ENCODE measurements at regions of chr4 and their contacts with region 1.

Region 1: DNA sequence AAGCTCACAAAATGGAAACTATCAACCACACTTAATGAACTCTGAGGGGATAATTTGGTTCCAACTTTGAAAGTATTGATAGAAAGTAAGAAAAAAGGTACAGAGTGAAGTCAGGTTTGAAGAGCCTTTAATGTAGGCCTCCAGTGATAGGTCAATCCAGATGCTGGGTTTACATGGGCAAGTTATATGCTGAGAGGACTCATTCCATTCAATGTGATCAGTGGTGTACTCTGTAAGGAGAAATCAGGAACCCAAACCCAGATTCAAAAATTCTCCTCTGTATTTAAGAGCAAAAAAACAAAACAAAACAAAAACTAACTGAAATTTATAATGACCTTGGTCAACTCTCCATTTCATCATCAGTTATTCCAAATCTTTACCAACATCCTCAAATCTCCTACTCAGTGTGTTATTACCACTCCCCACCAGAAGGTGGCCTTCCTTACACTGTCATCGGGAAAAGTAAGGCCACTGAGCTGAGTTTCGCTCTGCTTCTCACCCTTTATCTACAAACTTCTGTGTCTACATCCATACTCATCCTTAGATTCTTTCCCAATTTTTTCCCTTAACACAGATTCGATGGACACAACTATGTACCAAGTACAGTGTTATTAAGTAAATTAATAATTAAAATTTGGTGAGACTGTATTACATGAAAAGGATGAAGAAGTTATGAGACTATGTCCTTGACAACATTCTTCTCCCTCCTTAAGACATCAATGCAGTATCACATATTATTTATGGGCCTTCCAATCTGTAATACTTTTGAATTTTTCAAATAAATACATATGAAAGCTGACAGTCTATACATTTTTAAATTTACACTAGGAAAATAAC is 88.3 kb downstream of the ZAR1 start:
- DNase-seq: peak in 2 of 4 donors; percentile 57 to 77
- ATAC-seq: peak; percentile 98
- H3K4me3 ChIP-seq: no peak overlapping the region
- H3K27ac ChIP-seq: no peak overlapping the region
- H3K4me1 ChIP-seq: no peaks in the 10 kb centered on the region
- H3K27me3 ChIP-seq: no peaks in the 10 kb centered on the region
- CTCF ChIP-seq: peak; percentile 83 to 90

Region 2: DNA sequence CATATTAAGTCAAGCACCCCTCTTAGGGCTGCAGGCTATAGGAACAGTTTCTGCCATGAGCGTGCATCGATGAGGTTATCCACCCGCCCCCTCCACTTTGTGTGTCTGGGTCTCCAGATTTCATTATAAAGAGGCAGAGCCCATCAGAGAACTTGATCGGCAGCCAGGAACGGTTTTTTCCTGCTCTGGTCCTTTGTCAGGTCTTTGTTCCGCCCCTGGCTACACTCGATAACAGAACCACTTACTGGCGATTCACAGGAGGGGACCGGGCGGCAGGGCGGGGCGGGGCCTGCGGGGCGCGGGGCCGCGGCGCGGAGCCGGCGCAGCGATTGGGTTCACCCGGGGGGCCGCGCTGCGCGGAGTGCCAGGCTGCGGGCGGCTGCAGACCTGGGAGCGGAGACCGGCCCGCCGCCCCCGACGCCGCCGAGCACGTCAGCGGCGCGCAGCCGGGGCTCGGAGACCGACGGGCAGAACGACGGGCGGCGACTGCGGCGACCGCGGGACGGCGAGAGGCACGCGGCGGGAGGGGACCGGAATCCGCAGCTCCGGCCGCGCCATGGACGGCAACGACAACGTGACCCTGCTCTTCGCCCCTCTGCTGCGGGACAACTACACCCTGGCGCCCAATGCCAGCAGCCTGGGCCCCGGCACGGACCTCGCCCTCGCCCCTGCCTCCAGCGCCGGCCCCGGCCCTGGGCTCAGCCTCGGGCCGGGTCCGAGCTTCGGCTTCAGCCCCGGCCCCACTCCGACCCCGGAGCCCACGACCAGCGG is 95.2 kb before region 1 on chr4 and contains the start of gene SLC10A4:
- intact Hi-C with region 1: no loop called
- DNase-seq: peak in 1 of 4 donors; percentile 76
- ATAC-seq: peak; percentile 67
- H3K4me3 ChIP-seq: peak within 1 kb of the TSS; percentile 9 to 31
- H3K27ac ChIP-seq: no peak within 1 kb of the TSS
- H3K4me1 ChIP-seq: peaks cover 0 to 20% of the 10 kb centered on the region in 2 donors
- H3K27me3 ChIP-seq: peaks cover 60 to 88% of the 10 kb centered on the region in 2 donors
- CTCF ChIP-seq: no peak
- polyA plus RNA-seq, gene SLC10A4: 0.31 to 0.58 (median 0.36) TPM

Region 3: GRCh38 chr4:48499551-48500066 is 78.7 kb before region 1 on chr4:
- intact Hi-C with region 1: no loop called
- DNase-seq: no peak
- ATAC-seq: no peak
- H3K4me3 ChIP-seq: no peak overlapping the region
- H3K27ac ChIP-seq: no peak overlapping the region
- H3K4me1 ChIP-seq: no peaks in the 10 kb centered on the region
- H3K27me3 ChIP-seq: no peaks in the 10 kb centered on the region
- CTCF ChIP-seq: no peak

Region 4: DNA sequence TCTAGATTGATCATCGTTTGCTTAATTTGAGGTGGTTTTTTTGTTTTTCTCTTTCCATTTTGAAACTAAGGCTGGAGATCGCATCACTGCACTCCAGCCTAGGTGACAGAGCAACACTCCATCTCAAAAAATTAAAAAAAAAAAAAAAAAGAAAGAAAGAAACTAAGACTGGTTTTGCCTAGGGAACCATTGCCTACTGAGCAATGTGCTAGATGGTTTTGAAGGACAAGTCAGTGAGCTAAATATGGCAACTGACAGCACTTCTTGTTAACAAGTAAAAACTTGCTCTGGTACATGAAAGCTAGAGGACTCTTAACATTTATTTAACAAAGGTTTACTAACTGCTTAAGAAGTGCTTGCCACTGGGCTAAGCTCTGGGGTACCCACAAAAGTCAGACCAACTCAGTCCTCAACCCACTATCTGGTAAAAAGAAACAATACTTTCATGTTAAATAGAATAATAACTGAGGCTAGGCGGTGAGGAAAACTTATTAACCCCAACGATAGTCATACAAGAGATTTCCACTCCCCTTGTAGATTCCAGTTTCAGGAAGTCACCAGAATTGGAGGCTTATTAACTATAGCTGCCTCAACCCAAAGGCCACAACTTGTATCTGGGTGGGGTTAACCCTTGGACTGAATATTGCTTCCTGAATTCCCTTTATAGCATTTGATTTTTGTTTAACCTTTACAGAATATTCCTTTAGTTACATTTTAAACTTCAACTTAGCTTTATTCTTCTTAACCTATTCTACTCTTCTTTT is 90.1 kb after region 1 on chr4:
- intact Hi-C with region 1: no loop called
- DNase-seq: no peak
- ATAC-seq: peak; percentile 86
- H3K4me3 ChIP-seq: no peak overlapping the region
- H3K27ac ChIP-seq: no peak overlapping the region
- H3K4me1 ChIP-seq: peaks cover 5 to 38% of the 10 kb centered on the region in 2 donors
- H3K27me3 ChIP-seq: no peaks in the 10 kb centered on the region
- CTCF ChIP-seq: no peak

Region 5: DNA sequence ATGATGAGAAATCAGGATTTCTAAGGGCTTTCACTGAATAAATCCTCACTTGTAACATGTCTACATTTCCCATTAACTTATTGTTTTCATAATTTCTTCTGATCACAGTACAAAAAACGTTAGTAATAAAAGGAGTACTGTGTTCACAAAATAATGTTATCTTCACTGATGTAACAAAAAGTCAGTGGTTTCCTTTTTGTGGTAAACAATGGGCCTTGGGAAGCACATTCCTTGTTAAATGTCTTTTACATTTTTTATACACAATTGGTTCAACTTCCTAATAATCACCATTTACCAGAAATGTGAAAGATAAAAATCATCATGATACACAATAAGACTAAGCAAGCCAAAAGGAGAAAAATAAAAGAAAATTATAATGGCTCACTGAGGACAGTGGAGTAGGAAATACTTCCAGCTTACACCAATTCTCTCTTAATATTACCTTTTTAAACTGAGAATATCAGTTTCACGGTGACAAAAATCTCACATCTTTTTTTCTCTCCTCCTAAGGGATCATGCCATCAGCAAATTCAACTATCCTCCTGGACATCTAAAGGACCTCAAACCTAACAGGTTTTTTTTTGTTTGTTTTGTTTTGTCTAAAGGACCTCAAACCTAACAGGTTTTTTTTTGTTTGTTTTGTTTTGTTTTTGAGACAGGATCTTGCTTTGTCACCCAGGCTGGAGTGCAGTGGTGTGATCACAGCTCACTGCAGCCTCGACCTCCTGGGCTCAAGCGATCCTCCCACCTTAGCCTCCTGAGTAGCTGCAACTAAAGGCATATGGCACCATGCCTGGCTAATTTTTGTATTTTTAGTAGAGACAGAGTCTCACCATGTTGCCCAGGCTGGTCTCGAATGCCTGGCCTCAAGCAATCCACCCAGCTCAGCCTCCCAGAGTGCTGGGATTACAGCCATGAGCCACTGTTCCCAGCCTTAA is 144.4 kb after region 1 on chr4:
- intact Hi-C with region 1: no loop called
- DNase-seq: no peak
- ATAC-seq: no peak
- H3K4me3 ChIP-seq: no peak overlapping the region
- H3K27ac ChIP-seq: peak overlapping the region in 1 of 2 donors; percentile 0
- H3K4me1 ChIP-seq: peaks cover 5 to 28% of the 10 kb centered on the region in 2 donors
- H3K27me3 ChIP-seq: no peaks in the 10 kb centered on the region
- CTCF ChIP-seq: no peak

Region 6: GRCh38 chr4:48963042-48963679 is 384.8 kb after region 1 on chr4:
- intact Hi-C with region 1: loop called in 1 of 2 experiments (anchors 10 kb)
- DNase-seq: peak in 3 of 4 donors; percentile 59 to 85 (median 68)
- ATAC-seq: peak; percentile 99
- H3K4me3 ChIP-seq: no peak overlapping the region
- H3K27ac ChIP-seq: no peak overlapping the region
- H3K4me1 ChIP-seq: no peaks in the 10 kb centered on the region
- H3K27me3 ChIP-seq: no peaks in the 10 kb centered on the region
- CTCF ChIP-seq: peak; percentile 89 to 97